B cell (primary cell): ENCODE measurements at regions of chr19 and their contacts with region 1.

Region 1: GRCh38 chr19:23395041-23395721 is at the start of gene ZNF91:
- DNase-seq: peak; percentile 93
- ATAC-seq: peak; percentile 96
- H3K4me3 ChIP-seq: peak within 1 kb of the TSS; percentile 77 to 100 (median 94)
- H3K4me3 Mint-ChIP-seq: peak within 1 kb of the TSS; percentile 98
- H3K27ac ChIP-seq: peak within 1 kb of the TSS; percentile 92 to 96
- H3K27ac Mint-ChIP-seq: peak within 1 kb of the TSS; percentile 97
- H3K4me1 ChIP-seq: peaks cover 16 to 22% of the 10 kb centered on the region in 2 donors
- H3K4me1 Mint-ChIP-seq: peaks cover 39% of the 10 kb centered on the region
- H3K27me3 ChIP-seq: no peaks in the 10 kb centered on the region
- H3K27me3 Mint-ChIP-seq: no peaks in the 10 kb centered on the region
- CTCF ChIP-seq: no peak
- total RNA-seq, gene ZNF91: 79.6 and 89.5 TPM in 2 replicates

Region 2: GRCh38 chr19:23249911-23250649 is 145.1 kb before region 1 on chr19 and contains the start of gene ZNF724:
- CTCF ChIA-PET with region 1: no interaction called
- POLR2A ChIA-PET with region 1: interaction called, 5 read pairs
- intact Hi-C with region 1: loop called (anchors 1 kb)
- DNase-seq: peak; percentile 92
- ATAC-seq: peak; percentile 100
- H3K4me3 ChIP-seq: peak within 1 kb of the TSS; percentile 39 to 98 (median 87)
- H3K4me3 Mint-ChIP-seq: peak within 1 kb of the TSS; percentile 98
- H3K27ac ChIP-seq: peak within 1 kb of the TSS; percentile 59 to 67
- H3K27ac Mint-ChIP-seq: peak within 1 kb of the TSS; percentile 88
- H3K4me1 ChIP-seq: peaks cover 5 to 11% of the 10 kb centered on the region in 2 donors
- H3K4me1 Mint-ChIP-seq: peaks cover 12% of the 10 kb centered on the region
- H3K27me3 ChIP-seq: no peaks in the 10 kb centered on the region
- H3K27me3 Mint-ChIP-seq: no peaks in the 10 kb centered on the region
- CTCF ChIP-seq: no peak
- total RNA-seq, gene ZNF724: 7.9 and 10.0 TPM in 2 replicates

Region 3: DNA sequence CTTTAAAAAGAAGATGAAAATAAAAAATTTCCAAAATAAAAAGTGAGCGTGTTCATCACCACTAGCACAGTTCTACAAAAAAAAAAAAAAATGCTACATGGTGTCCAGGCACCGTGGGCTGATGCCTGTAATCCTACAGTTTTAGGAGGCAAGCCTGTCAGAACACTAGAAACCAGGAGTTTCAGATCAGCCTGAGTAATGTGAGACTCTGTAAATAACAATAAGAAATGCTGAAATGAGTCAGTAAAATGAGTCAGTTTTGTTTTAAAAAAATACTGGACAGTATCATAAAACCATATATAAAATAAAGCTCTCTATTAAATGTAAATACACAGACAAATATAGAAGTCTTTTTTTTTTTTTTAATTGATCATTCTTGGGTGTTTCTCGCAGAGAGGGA is 30.0 kb before region 1 on chr19:
- CTCF ChIA-PET with region 1: no interaction called
- POLR2A ChIA-PET with region 1: no interaction called
- intact Hi-C with region 1: no loop called
- DNase-seq: no peak
- ATAC-seq: no peak
- H3K4me3 ChIP-seq: no peak overlapping the region
- H3K4me3 Mint-ChIP-seq: no peak overlapping the region
- H3K27ac ChIP-seq: no peak overlapping the region
- H3K27ac Mint-ChIP-seq: no peak overlapping the region
- H3K4me1 ChIP-seq: no peaks in the 10 kb centered on the region
- H3K4me1 Mint-ChIP-seq: no peaks in the 10 kb centered on the region
- H3K27me3 ChIP-seq: no peaks in the 10 kb centered on the region
- H3K27me3 Mint-ChIP-seq: no peaks in the 10 kb centered on the region
- CTCF ChIP-seq: no peak

Region 4: GRCh38 chr19:23686621-23687423 is 291.6 kb after region 1 on chr19 and contains the start of gene ZNF675:
- CTCF ChIA-PET with region 1: no interaction called
- POLR2A ChIA-PET with region 1: interaction called, 7 read pairs
- intact Hi-C with region 1: loop called (anchors 2 kb)
- DNase-seq: peak; percentile 93
- ATAC-seq: peak; percentile 96
- H3K4me3 ChIP-seq: peak within 1 kb of the TSS; percentile 70 to 93 (median 83)
- H3K4me3 Mint-ChIP-seq: peak within 1 kb of the TSS; percentile 98
- H3K27ac ChIP-seq: peak within 1 kb of the TSS; percentile 80 to 90
- H3K27ac Mint-ChIP-seq: peak within 1 kb of the TSS; percentile 98
- H3K4me1 ChIP-seq: peaks cover 13 to 18% of the 10 kb centered on the region in 2 donors
- H3K4me1 Mint-ChIP-seq: peaks cover 48% of the 10 kb centered on the region
- H3K27me3 ChIP-seq: no peaks in the 10 kb centered on the region
- H3K27me3 Mint-ChIP-seq: no peaks in the 10 kb centered on the region
- CTCF ChIP-seq: no peak
- total RNA-seq, gene ZNF675: 46.1 and 46.7 TPM in 2 replicates

Region 5: DNA sequence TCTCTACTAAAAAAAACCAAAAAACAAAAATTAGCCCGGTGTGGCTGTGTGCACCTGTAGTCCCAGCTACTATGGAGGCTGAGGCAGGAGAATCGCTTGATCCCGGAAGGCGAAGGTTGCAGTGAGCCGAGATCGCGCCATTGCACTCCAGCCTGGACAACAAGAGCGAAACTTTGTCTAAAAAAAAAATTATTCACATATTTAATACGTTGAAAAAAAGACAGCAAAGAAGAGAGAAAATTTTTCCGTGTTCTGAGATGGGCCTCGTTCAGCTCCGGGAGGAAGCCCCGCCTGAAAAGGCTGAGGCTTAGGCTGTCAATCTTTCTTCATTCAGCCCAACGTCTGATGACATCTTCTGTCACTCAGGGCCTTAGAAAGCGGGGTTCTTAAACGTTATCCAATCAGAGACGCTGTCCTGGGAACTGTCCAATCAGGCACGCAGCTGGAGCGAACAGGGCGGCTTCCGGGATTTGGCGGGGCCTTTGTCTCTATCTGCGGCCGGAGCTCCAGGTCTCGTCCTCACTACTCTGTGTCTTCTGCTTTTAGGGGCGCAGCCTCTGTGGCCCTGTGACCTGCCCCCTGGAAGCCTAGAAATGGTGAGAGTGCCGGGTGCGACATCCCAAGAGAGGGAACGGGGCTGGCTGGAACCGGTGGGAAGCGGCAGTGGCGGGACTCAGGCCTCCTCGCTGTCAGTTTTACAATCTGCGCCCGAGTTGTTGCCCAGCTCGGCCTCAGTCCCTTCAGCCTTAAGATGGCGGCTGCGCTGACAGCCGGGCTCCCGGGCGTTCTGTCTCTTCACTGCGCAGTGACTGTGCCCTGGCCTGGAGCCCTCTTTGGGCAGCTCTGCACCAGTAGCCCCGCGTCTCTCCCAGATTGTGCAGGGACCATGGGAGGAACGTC is 519.5 kb after region 1 on chr19 and contains the start of gene ZNF726:
- CTCF ChIA-PET with region 1: no interaction called
- POLR2A ChIA-PET with region 1: no interaction called
- intact Hi-C with region 1: loop called (anchors 2 kb)
- DNase-seq: peak; percentile 93
- ATAC-seq: peak; percentile 95
- H3K4me3 ChIP-seq: peak within 1 kb of the TSS; percentile 44 to 82 (median 69)
- H3K4me3 Mint-ChIP-seq: peak within 1 kb of the TSS; percentile 95
- H3K27ac ChIP-seq: peak within 1 kb of the TSS; percentile 54 to 78
- H3K27ac Mint-ChIP-seq: peak within 1 kb of the TSS; percentile 86
- H3K4me1 ChIP-seq: peaks cover 0 to 7% of the 10 kb centered on the region in 2 donors
- H3K4me1 Mint-ChIP-seq: peaks cover 11% of the 10 kb centered on the region
- H3K27me3 ChIP-seq: no peaks in the 10 kb centered on the region
- H3K27me3 Mint-ChIP-seq: no peaks in the 10 kb centered on the region
- CTCF ChIP-seq: no peak
- total RNA-seq, gene ZNF726: 5.6 and 8.3 TPM in 2 replicates

Region 6: DNA sequence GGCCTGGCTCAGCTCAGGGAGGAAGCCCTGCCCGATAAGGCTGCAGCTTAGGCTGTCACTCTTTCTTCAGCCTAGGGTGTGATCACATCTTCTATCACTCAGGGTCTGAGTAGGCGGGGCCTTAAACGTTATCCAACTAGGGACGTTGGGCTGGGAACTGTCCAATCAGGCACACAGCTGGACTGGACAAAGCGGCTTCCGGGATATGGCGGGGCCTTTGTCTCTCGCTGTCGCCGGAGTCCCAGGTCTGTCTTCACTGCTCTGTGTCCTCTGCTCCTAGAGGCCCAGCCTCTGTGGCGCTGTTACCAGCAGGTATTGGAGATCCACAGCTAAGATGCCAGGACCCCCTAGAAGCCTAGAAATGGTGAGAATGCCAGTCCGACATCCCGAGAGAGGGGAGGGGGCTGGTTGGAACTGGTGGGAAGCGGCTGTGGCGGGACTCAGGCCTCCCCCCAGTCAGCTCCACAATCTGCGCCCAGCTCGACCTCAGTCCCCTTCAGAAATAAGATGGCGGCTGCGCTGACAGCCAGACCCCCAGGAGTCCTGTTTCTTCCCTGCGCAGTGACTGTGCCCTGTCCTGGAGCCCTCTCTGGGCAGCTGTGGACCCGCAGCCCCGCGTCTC is 691.9 kb after region 1 on chr19 and contains the start of gene ZNF254:
- CTCF ChIA-PET with region 1: no interaction called
- POLR2A ChIA-PET with region 1: interaction called, 5 read pairs
- intact Hi-C with region 1: loop called (anchors 1 kb)
- DNase-seq: peak; percentile 89
- ATAC-seq: peak; percentile 99
- H3K4me3 ChIP-seq: peak within 1 kb of the TSS; percentile 61 to 91 (median 74)
- H3K4me3 Mint-ChIP-seq: peak within 1 kb of the TSS; percentile 96
- H3K27ac ChIP-seq: peak within 1 kb of the TSS; percentile 84 to 89
- H3K27ac Mint-ChIP-seq: peak within 1 kb of the TSS; percentile 95
- H3K4me1 ChIP-seq: peaks cover 0 to 14% of the 10 kb centered on the region in 2 donors
- H3K4me1 Mint-ChIP-seq: peaks cover 15% of the 10 kb centered on the region
- H3K27me3 ChIP-seq: no peaks in the 10 kb centered on the region
- H3K27me3 Mint-ChIP-seq: no peaks in the 10 kb centered on the region
- CTCF ChIP-seq: no peak
- total RNA-seq, gene ZNF254: 25.2 and 28.8 TPM in 2 replicates